ENCODE measurements at regions of chr15 and their contacts with region 1.

Region 1: GRCh38 chr15:50128266-50128665 is 9.2 kb upstream of the ATP8B4 start:
- DNase-seq: peak in 41 of 42 donors; percentile 15 to 75 (median 53)

Region 2: GRCh38 chr15:50066192-50066591 is 62.1 kb before region 1 on chr15:
- intact Hi-C with region 1: loop called (anchors 10 kb)
- DNase-seq: no peak

Region 3: GRCh38 chr15:50280271-50280670 is 152.0 kb after region 1 on chr15:
- intact Hi-C with region 1: no loop called
- DNase-seq: no peak

Region 4: GRCh38 chr15:50354838-50355618 is 226.8 kb after region 1 on chr15 and contains the start of gene GABPB1:
- intact Hi-C with region 1: no loop called
- DNase-seq: peak; percentile 67 to 94 (median 88)

Measured in head of caudate nucleus (tissue), 42 donors.